ENCODE measurements at regions of chr2 and their contacts with region 1.

Region 1: GRCh38 chr2:25376750-25377621 is 35.3 kb upstream of the DNMT3A start:
- DNase-seq: peak; percentile 70 to 87 (median 78)
- H3K4me3 ChIP-seq: peak overlapping the region in 58 of 59 donors; percentile 15 to 64 (median 46)
- H3K27ac ChIP-seq: peak overlapping the region; percentile 0 to 89 (median 74)
- H3K27me3 ChIP-seq: no peaks in the 10 kb centered on the region
- CTCF ChIP-seq: peak; percentile 75 to 99 (median 96)

Region 2: DNA sequence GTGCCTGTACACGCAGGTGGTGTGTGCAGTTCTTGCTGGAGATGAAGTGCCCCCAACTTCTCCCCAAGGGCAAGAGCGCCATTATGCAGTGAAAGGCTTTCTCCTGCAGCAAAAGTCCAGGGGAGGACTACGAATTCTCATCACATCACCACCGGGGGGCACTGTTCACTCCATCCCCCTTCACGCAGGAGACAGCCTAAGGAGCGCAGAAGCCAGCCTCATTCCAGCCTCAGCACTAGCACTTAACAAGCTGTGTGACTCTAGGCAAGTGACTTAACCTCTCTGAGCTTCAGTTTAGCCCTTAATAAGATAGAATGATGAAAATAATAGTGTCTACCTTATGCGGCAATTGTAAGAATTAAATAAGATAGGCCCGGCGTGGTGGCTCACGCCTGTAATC is 67.6 kb before region 1 on chr2:
- intact Hi-C with region 1: loop called in 1 of 2 experiments (anchors 5 kb)
- DNase-seq: peak in 9 of 10 donors; percentile 55 to 80 (median 74)
- H3K4me3 ChIP-seq: peak overlapping the region in 1 of 59 donors; percentile 6
- H3K27ac ChIP-seq: peak overlapping the region in 54 of 59 donors; percentile 18 to 86 (median 70)
- H3K27me3 ChIP-seq: no peaks in the 10 kb centered on the region
- CTCF ChIP-seq: peak; percentile 31 to 72 (median 60)

Region 3: GRCh38 chr2:26970244-26970920 is 1593.4 kb after region 1 on chr2 and contains the start of gene MAPRE3:
- intact Hi-C with region 1: loop called in 1 of 2 experiments (anchors 10 kb)
- DNase-seq: peak; percentile 80 to 94 (median 90)
- H3K4me3 ChIP-seq: peak within 1 kb of the TSS; percentile 61 to 96 (median 84)
- H3K27ac ChIP-seq: peak within 1 kb of the TSS in 55 of 59 donors; percentile 24 to 91 (median 76)
- H3K27me3 ChIP-seq: no peaks in the 10 kb centered on the region
- CTCF ChIP-seq: peak in 11 of 56 donors; percentile 5 to 34 (median 19)
- total RNA-seq, gene MAPRE3: 97.4 to 247 (median 192) TPM